MCF 10A (cell line): ENCODE measurements at regions of chrX and their contacts with region 1.

Region 1: GRCh38 chrX:46758906-46759644 is at the start of gene SLC9A7:
- DNase-seq: peak; percentile 75
- H3K4me3 Mint-ChIP-seq: peak within 1 kb of the TSS; percentile 74
- H3K27ac Mint-ChIP-seq: peak within 1 kb of the TSS; percentile 24
- H3K4me1 Mint-ChIP-seq: no peaks in the 10 kb centered on the region
- H3K27me3 Mint-ChIP-seq: no peaks in the 10 kb centered on the region
- CTCF ChIP-seq: peak; percentile 75
- total RNA-seq, gene SLC9A7: 28.3 and 29.3 TPM in 2 replicates

Region 2: GRCh38 chrX:46653482-46653881 is 105.6 kb before region 1 on chrX:
- CTCF ChIA-PET with region 1: interaction called, 3 read pairs
- POLR2A ChIA-PET with region 1: interaction called, 3 read pairs
- intact Hi-C with region 1: loop called (anchors 5 kb)
- DNase-seq: peak; percentile 51
- H3K4me3 Mint-ChIP-seq: no peak overlapping the region
- H3K27ac Mint-ChIP-seq: no peak overlapping the region
- H3K4me1 Mint-ChIP-seq: no peaks in the 10 kb centered on the region
- H3K27me3 Mint-ChIP-seq: peaks cover 10% of the 10 kb centered on the region
- CTCF ChIP-seq: peak; percentile 38

Region 3: GRCh38 chrX:46796574-46797191 is 37.6 kb after region 1 on chrX:
- CTCF ChIA-PET with region 1: interaction called, 33 read pairs
- POLR2A ChIA-PET with region 1: interaction called, 15 read pairs
- intact Hi-C with region 1: loop called (anchors 1 kb)
- DNase-seq: peak; percentile 72
- H3K4me3 Mint-ChIP-seq: no peak overlapping the region
- H3K27ac Mint-ChIP-seq: no peak overlapping the region
- H3K4me1 Mint-ChIP-seq: no peaks in the 10 kb centered on the region
- H3K27me3 Mint-ChIP-seq: peaks cover 21% of the 10 kb centered on the region
- CTCF ChIP-seq: peak; percentile 80

Region 4: GRCh38 chrX:46836701-46837557 is 77.9 kb after region 1 on chrX and contains the start of gene RP2:
- CTCF ChIA-PET with region 1: interaction called, 4 read pairs
- POLR2A ChIA-PET with region 1: interaction called, 10 read pairs
- intact Hi-C with region 1: no loop called
- DNase-seq: peak; percentile 91
- H3K4me3 Mint-ChIP-seq: peak within 1 kb of the TSS; percentile 92
- H3K27ac Mint-ChIP-seq: peak within 1 kb of the TSS; percentile 90
- H3K4me1 Mint-ChIP-seq: peaks cover 6% of the 10 kb centered on the region
- H3K27me3 Mint-ChIP-seq: peaks cover 16% of the 10 kb centered on the region
- CTCF ChIP-seq: no peak
- total RNA-seq, gene RP2: 5.4 and 8.0 TPM in 2 replicates

Region 5: DNA sequence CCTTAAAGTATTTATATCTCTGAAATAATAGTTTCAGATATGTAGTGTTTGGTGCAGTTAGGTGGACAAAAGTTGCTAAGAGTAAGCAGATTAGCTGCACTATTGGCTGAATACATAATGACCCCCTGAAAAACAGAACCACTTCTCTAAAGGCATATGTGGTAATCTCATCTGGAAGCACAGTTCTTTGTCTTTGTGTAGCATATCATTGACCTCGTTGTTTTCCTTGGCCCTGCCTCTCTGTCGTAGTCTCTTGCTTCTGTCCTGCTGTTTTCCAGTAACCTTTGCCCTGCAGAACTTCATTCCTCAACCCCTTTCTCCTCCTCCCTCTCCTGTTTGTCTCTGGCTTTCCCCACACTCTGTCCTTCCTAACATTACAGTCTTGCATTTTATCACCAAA is 194.5 kb after region 1 on chrX:
- CTCF ChIA-PET with region 1: no interaction called
- POLR2A ChIA-PET with region 1: no interaction called
- intact Hi-C with region 1: no loop called
- DNase-seq: no peak
- H3K4me3 Mint-ChIP-seq: no peak overlapping the region
- H3K27ac Mint-ChIP-seq: no peak overlapping the region
- H3K4me1 Mint-ChIP-seq: peaks cover 7% of the 10 kb centered on the region
- H3K27me3 Mint-ChIP-seq: peaks cover 42% of the 10 kb centered on the region
- CTCF ChIP-seq: no peak

Region 6: GRCh38 chrX:47093248-47093647 is 334.2 kb after region 1 on chrX:
- CTCF ChIA-PET with region 1: interaction called, 4 read pairs
- POLR2A ChIA-PET with region 1: interaction called, 4 read pairs
- intact Hi-C with region 1: loop called (anchors 1 kb)
- DNase-seq: peak; percentile 47
- H3K4me3 Mint-ChIP-seq: no peak overlapping the region
- H3K27ac Mint-ChIP-seq: no peak overlapping the region
- H3K4me1 Mint-ChIP-seq: no peaks in the 10 kb centered on the region
- H3K27me3 Mint-ChIP-seq: peaks cover 88% of the 10 kb centered on the region
- CTCF ChIP-seq: no peak

Region 7: GRCh38 chrX:47658684-47659515 is 899.8 kb after region 1 on chrX and contains the start of gene UXT:
- CTCF ChIA-PET with region 1: no interaction called
- POLR2A ChIA-PET with region 1: no interaction called
- intact Hi-C with region 1: no loop called
- DNase-seq: peak; percentile 92
- H3K4me3 Mint-ChIP-seq: peak within 1 kb of the TSS; percentile 95
- H3K27ac Mint-ChIP-seq: peak within 1 kb of the TSS; percentile 98
- H3K4me1 Mint-ChIP-seq: peaks cover 12% of the 10 kb centered on the region
- H3K27me3 Mint-ChIP-seq: no peaks in the 10 kb centered on the region
- CTCF ChIP-seq: no peak
- total RNA-seq, gene UXT: 112 and 140 TPM in 2 replicates